ENCODE measurements at regions of chr11 and their contacts with region 1.

Region 1: DNA sequence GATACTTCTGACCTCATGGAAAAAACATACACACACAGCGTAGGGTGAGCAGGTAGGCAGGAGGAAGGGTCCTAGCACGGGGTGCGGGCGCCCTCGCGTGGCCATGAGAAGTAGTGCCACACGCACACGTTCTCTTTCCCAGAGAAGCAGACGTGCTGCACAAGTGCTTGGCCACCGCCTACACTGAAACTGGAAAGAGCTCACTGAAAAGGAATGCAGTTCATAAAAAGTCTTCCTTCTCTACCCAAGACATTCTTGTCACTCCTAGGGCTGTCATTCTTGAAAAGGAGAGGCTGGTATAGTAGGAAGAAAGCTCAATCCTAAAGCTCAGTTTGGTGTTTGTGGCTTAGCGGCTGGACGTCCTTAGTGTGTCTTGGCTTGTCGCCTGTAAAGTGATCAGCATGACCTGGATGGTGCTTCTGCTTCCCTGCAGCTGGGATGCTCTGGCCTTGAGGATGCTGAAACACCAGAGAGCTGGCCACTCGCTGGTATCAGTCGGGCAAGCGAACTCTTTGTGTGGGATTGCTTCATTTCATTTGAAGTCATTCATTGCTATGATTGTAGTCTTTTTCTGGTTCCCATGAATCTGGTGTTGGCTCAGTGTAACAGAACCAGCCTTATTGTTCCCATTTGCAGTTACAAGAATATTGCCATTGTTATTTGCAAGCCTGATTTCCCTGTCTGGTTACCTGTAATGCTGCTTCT is 303.8 kb downstream of the NTM start:
- DNase-seq: peak; percentile 59 to 80
- ATAC-seq: peak; percentile 74 to 90 (median 87)
- H3K4me3 ChIP-seq: no peak overlapping the region
- H3K27ac ChIP-seq: no peak overlapping the region
- H3K4me1 ChIP-seq: no peaks in the 10 kb centered on the region
- H3K27me3 ChIP-seq: no peaks in the 10 kb centered on the region
- CTCF ChIP-seq: peak; percentile 90

Region 2: GRCh38 chr11:130924770-130925169 is 749.4 kb before region 1 on chr11:
- intact Hi-C with region 1: loop called (anchors 5 kb)
- DNase-seq: no peak
- ATAC-seq: no peak
- H3K4me3 ChIP-seq: no peak overlapping the region
- H3K27ac ChIP-seq: no peak overlapping the region
- H3K4me1 ChIP-seq: no peaks in the 10 kb centered on the region
- H3K27me3 ChIP-seq: no peaks in the 10 kb centered on the region
- CTCF ChIP-seq: no peak

Region 3: DNA sequence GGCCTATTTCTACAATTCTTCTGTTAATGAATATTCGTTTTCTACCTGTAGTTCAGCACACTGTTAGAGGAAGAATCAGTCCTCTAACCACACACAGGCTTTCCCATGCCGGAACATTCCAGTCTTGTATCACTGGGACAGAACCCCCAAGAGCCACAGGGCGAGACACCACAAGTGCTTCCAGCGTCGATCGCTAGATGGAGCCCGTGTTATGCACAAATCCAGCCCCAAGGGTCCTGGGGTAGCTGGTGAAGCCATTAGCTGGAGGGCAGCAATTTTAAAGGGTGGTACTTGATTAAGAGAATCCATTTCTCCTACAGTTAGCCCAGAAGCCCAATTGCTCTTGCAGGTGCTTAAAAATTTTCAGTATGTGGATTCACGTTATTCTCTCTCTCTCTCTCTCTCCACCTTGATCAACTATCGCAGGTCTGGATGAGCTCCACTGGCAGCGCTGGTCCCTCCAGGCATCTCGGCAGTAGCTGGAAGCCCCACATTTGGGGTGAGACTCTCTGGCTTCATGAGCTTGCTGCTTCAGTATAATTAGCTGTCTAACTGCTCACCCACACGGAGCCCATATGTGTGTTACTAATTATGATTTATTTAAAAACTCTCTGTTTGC is 609.7 kb before region 1 on chr11:
- intact Hi-C with region 1: loop called (anchors 5 kb)
- DNase-seq: peak; percentile 28 to 61
- ATAC-seq: peak in 1 of 4 donors; percentile 44
- H3K4me3 ChIP-seq: no peak overlapping the region
- H3K27ac ChIP-seq: no peak overlapping the region
- H3K4me1 ChIP-seq: no peaks in the 10 kb centered on the region
- H3K27me3 ChIP-seq: peaks cover 0 to 18% (median 0%) of the 10 kb centered on the region in 3 donors
- CTCF ChIP-seq: peak; percentile 66

Region 4: GRCh38 chr11:131449036-131450019 is 224.9 kb before region 1 on chr11:
- intact Hi-C with region 1: no loop called
- DNase-seq: no peak
- ATAC-seq: no peak
- H3K4me3 ChIP-seq: no peak overlapping the region
- H3K27ac ChIP-seq: no peak overlapping the region
- H3K4me1 ChIP-seq: no peaks in the 10 kb centered on the region
- H3K27me3 ChIP-seq: peaks cover 0 to 2% (median 0%) of the 10 kb centered on the region in 3 donors
- CTCF ChIP-seq: no peak

Region 5: DNA sequence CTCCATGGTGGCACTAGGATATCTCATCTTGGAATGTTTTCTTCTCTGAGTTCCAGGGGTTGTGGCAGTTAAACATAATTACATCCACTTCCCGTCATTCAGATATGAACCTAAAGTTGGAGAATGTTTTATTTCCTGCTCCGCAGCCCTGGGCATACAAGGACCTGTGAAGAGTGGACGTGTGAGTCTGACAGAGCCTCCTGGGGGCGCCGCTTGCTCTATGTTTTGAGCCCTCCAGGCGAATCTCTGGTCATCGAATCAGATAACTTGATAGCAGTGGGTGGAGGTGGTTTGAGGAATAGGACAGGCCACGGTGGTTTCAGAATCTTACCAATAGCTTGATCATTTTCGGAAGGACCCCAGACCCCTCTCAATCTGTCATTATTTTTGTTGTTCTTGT is 129.6 kb before region 1 on chr11:
- intact Hi-C with region 1: no loop called
- DNase-seq: no peak
- ATAC-seq: no peak
- H3K4me3 ChIP-seq: no peak overlapping the region
- H3K27ac ChIP-seq: no peak overlapping the region
- H3K4me1 ChIP-seq: no peaks in the 10 kb centered on the region
- H3K27me3 ChIP-seq: peaks cover 0 to 14% (median 2%) of the 10 kb centered on the region in 3 donors
- CTCF ChIP-seq: no peak

Region 6: DNA sequence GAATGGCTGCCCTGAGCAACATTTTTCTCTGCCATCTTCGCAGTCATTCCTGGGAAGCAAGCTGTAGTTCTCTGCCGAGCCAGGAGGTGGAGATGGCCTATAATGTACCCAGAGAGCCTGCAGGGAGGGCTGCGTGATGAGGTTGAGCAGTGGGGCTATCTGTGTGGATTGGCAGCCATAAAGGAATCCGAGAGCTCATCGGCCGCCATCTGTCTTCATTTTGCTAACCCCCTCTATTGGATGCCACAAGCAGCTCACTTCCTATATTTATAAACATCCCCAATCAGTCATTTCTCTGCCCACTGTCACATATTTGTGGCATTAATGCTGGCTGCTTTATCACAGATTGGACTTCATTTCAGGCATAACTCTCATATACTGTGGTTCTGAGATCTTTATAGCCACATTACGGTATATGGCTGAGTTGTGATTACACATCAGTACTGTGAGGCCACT is 94.2 kb before region 1 on chr11:
- intact Hi-C with region 1: loop called in 1 of 2 experiments (anchors 2 kb)
- DNase-seq: peak in 1 of 2 donors; percentile 18
- ATAC-seq: no peak
- H3K4me3 ChIP-seq: no peak overlapping the region
- H3K27ac ChIP-seq: no peak overlapping the region
- H3K4me1 ChIP-seq: no peaks in the 10 kb centered on the region
- H3K27me3 ChIP-seq: peaks cover 0 to 6% (median 2%) of the 10 kb centered on the region in 3 donors
- CTCF ChIP-seq: peak; percentile 17

Region 7: GRCh38 chr11:131824771-131825170 is 150.6 kb after region 1 on chr11:
- intact Hi-C with region 1: no loop called
- DNase-seq: no peak
- ATAC-seq: peak in 2 of 4 donors; percentile 22 to 44
- H3K4me3 ChIP-seq: no peak overlapping the region
- H3K27ac ChIP-seq: no peak overlapping the region
- H3K4me1 ChIP-seq: no peaks in the 10 kb centered on the region
- H3K27me3 ChIP-seq: peaks cover 0 to 3% (median 0%) of the 10 kb centered on the region in 3 donors
- CTCF ChIP-seq: no peak

Measured in psoas muscle (tissue), 8 donors.